Activated T-helper 1 cell treated with anti-CD3 and anti-CD28 coated beads, Interleukin-12 subunit alpha, Interleukin-12 subunit beta, Interleukin-2, Interleukin-4 antibody, amounts not matched to agents 30 ng/mL and 10 ng/mL and 1 ng/mL, durations not matched to agents 14 hours and 24 hours and 36 hours (primary cell): ENCODE measurements at regions of chr13 and their contacts with region 1.

Region 1: DNA sequence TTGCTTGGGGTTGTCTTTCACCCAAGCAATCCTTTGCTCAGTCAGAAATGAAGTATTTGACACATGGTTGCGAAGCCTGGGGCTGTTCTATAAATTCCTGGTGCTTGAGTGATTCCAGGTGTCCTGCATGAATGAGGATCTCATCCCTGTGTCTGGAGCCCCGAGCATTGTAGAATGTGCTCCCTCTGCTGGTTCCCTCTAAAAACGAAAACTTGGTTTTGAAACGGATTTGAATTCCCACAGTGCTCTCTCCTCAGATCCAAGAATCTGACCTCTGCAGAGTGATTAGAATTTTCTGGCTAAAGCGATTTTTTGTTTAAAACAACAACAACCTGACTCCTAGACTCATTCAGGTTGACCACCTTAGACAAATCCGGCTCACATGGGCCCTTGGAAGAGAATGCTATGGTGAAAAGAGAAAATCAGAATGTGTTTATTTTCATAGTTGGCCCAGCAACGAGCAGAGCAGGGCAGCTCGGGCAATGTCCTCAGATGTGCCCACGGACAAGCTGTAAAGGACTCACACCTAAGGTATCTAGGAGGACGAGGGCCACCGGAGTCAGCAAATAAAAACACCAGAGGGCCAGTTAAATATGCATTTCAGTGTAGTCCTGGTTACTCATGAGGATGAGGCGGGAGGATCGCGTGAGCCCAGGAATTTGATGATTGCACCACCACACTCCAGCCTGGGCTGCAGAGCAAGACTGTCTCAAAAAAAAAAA is 8.7 kb upstream of the ATP12A start:
- DNase-seq: no peak
- H3K4me3 Mint-ChIP-seq: no peak overlapping the region
- H3K27ac Mint-ChIP-seq: no peak overlapping the region
- H3K4me1 Mint-ChIP-seq: peaks cover 15% of the 10 kb centered on the region
- H3K27me3 Mint-ChIP-seq: peaks cover 17% of the 10 kb centered on the region

Region 2: DNA sequence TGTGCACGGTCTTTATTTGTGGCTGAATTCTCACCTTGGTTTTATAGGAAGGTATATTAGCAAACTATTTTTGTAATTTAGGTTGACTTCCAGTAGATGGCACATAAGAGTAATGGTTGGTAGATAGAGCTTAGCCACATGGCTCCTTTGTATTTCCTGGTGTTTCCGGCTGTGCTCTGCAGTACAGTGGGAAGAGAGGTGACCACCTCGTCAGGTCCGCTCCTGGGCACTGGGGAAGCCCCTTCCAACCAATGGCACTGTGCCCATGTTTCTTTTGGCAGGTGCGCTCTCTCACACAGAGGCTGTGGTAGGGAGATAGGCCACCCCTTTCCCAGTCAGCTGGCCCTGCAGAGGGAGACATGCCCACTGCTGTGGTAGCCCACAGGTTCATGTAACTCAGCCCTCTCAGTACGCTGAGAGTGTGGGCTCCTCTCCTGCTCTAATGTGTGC is 65.6 kb before region 1 on chr13:
- intact Hi-C with region 1: loop called (anchors 1 kb)
- DNase-seq: no peak
- H3K4me3 Mint-ChIP-seq: no peak overlapping the region
- H3K27ac Mint-ChIP-seq: no peak overlapping the region
- H3K4me1 Mint-ChIP-seq: peaks cover 12% of the 10 kb centered on the region
- H3K27me3 Mint-ChIP-seq: peaks cover 2% of the 10 kb centered on the region

Region 3: GRCh38 chr13:24627099-24627714 is 44.3 kb before region 1 on chr13:
- intact Hi-C with region 1: loop called (anchors 5 kb)
- DNase-seq: no peak
- H3K4me3 Mint-ChIP-seq: no peak overlapping the region
- H3K27ac Mint-ChIP-seq: no peak overlapping the region
- H3K4me1 Mint-ChIP-seq: peaks cover 42% of the 10 kb centered on the region
- H3K27me3 Mint-ChIP-seq: no peaks in the 10 kb centered on the region

Region 4: GRCh38 chr13:24709186-24709913 is 37.8 kb after region 1 on chr13:
- intact Hi-C with region 1: no loop called
- DNase-seq: peak; percentile 66
- H3K4me3 Mint-ChIP-seq: peak overlapping the region; percentile 47
- H3K27ac Mint-ChIP-seq: peak overlapping the region; percentile 28
- H3K4me1 Mint-ChIP-seq: peaks cover 19% of the 10 kb centered on the region
- H3K27me3 Mint-ChIP-seq: peaks cover 4% of the 10 kb centered on the region

Region 5: DNA sequence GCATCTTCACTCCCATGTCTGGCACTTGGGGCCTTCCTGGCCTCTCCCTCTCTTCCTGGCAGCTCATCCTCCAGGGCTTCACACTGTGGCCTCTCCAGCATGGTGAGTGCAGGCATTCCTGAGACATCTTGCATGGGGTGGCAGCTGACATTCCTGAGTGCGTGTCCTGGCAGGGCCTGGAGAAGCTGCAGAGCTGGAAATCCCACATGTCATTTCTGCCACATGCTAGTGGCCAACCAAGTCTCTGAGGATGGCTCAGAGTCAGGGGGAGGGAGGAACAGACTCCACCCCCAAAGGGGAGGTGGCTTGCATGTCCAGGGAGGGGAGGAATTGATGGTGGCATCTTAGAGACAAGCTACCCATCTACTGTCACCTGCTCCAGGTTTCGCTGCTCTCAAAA is 542.2 kb after region 1 on chr13:
- intact Hi-C with region 1: no loop called
- DNase-seq: no peak
- H3K4me3 Mint-ChIP-seq: no peak overlapping the region
- H3K27ac Mint-ChIP-seq: no peak overlapping the region
- H3K4me1 Mint-ChIP-seq: no peaks in the 10 kb centered on the region
- H3K27me3 Mint-ChIP-seq: no peaks in the 10 kb centered on the region